Uterus (tissue), 4 donors: ENCODE measurements at regions of chr15 and their contacts with region 1.

Region 1: GRCh38 chr15:77679902-77680301 is 47.2 kb upstream of the LINGO1 start:
- DNase-seq: no peak
- H3K4me3 ChIP-seq: no peak overlapping the region
- H3K27ac ChIP-seq: no peak overlapping the region
- H3K4me1 ChIP-seq: no peaks in the 10 kb centered on the region
- H3K27me3 ChIP-seq: no peaks in the 10 kb centered on the region
- CTCF ChIP-seq: no peak
- POLR2A ChIP-seq: no peak

Region 2: DNA sequence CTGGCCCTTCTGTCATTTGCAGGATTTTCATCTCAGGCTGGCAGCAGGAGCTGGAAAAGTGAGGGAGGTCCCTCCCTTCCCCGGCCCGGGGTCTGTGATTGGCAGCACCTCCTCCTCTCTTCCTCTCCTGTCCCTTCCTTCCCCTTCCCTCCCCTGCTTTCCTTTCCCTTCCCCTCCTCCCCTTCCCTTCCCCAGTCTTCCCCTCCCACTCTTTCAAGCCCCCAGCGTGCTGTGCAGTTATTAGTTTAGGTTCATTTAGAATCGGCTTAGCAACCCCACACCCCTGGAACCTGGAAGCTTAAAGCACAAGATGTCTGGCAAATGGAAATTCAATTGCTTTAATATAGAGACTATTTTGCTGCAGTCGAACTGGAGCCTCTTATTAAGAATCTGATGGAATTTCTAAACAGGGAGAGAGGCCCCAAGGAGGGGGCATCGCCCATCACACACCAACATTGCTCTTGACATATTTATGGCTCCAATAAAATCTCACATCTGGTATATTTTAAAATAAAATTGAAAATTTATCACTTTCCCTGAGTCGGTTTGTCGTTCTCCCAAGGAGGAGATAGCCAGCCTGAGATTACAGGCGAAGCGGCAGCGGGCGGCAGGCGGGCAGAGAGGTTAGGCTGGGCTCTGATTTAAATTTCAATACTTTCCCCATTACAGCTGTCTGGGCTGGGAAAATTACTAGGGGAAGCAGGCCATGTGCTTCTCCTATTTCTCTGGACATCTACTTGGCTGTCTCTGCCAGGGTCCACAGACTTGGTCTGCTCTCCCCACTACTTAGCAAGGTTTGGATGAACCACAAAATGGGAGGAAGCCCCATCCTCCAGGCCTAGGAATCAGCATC is 146.1 kb before region 1 on chr15:
- intact Hi-C with region 1: no loop called
- DNase-seq: no peak
- H3K4me3 ChIP-seq: no peak overlapping the region
- H3K27ac ChIP-seq: peak overlapping the region in 1 of 2 donors; percentile 2
- H3K4me1 ChIP-seq: no peaks in the 10 kb centered on the region
- H3K27me3 ChIP-seq: no peaks in the 10 kb centered on the region
- CTCF ChIP-seq: no peak
- POLR2A ChIP-seq: no peak

Region 3: DNA sequence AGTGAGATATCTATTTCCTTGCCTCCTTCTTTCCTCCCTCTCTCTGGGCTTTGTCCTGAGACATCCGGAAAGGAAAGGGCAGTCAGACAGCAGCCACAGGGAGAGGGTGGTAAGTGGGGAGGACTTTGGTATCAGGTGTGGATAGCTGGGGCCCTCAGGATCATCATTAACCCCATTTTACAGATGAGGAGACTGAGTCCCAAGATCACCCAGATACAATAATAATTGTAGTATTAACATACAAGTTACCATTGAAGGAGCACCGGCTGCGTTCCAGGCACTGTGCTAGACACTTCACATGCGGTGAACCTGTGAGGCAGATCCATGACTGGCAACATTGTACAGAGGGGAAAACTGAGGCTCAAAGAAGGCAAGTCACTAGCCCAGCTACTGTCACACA is 31.9 kb before region 1 on chr15:
- intact Hi-C with region 1: loop called (anchors 1 kb)
- DNase-seq: no peak
- H3K4me3 ChIP-seq: no peak overlapping the region
- H3K27ac ChIP-seq: no peak overlapping the region
- H3K4me1 ChIP-seq: no peaks in the 10 kb centered on the region
- H3K27me3 ChIP-seq: no peaks in the 10 kb centered on the region
- CTCF ChIP-seq: no peak
- POLR2A ChIP-seq: no peak